Activated CD8-positive, alpha-beta T cell treated with anti-CD3 and anti-CD28 coated beads for 36 hours (primary cell): ENCODE measurements at regions of chr14 and their contacts with region 1.

Region 1: DNA sequence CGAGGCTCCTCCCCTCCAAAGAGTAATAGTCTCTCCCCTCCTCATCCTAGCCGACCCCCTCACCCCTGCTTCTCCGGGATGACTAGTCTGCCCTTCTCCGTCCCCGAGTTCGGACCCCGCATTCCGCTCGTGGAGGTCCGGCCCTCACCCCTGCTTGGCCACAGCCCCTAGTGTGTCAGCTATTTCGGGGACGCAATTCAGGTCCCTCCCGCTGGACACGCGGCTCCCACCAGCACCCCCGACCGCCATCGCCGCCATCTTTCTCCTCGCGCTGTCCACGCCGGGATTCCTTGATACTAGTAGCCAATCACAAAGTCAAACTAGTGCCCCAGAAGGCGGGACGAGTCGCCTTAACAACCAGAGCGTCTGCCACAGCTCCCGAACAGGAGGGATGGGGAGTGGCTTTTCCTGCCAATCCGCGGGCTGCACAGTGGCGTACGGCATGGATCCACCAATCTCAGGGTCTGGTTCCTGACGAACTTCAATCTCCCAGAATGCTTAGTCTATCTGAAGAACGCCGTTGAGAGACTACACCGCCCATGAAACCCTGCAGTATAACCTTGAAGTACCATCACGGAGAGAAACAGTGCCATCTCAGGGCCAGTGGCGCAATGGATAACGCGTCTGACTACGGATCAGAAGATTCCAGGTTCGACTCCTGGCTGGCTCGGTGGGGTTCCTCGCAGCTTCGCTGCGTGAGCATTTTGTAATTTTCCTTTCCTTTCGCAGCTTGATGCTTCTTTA is at the start of gene PRMT5:
- DNase-seq: peak; percentile 99
- ATAC-seq: peak; percentile 96
- H3K4me3 Mint-ChIP-seq: no peak within 1 kb of the TSS
- H3K27ac Mint-ChIP-seq: no peak within 1 kb of the TSS
- H3K4me1 Mint-ChIP-seq: peaks cover 31% of the 10 kb centered on the region
- H3K27me3 Mint-ChIP-seq: no peaks in the 10 kb centered on the region
- CTCF ChIP-seq: no peak
- total RNA-seq, gene PRMT5: 107 to 116 TPM

Region 2: GRCh38 chr14:22918804-22919600 is 10.3 kb before region 1 on chr14 and contains the start of gene RBM23:
- CTCF ChIA-PET with region 1: interaction called, 46 read pairs
- POLR2A ChIA-PET with region 1: interaction called, 50 read pairs
- intact Hi-C with region 1: no loop called
- DNase-seq: peak; percentile 100
- ATAC-seq: peak; percentile 95
- H3K4me3 Mint-ChIP-seq: peak within 1 kb of the TSS; percentile 89
- H3K27ac Mint-ChIP-seq: peak within 1 kb of the TSS; percentile 98
- H3K4me1 Mint-ChIP-seq: peaks cover 36% of the 10 kb centered on the region
- H3K27me3 Mint-ChIP-seq: no peaks in the 10 kb centered on the region
- CTCF ChIP-seq: no peak
- total RNA-seq, gene RBM23: 46.9 to 55.2 TPM

Region 3: GRCh38 chr14:22939684-22940083 is 10.4 kb after region 1 on chr14:
- CTCF ChIA-PET with region 1: interaction called, 30 read pairs
- POLR2A ChIA-PET with region 1: interaction called, 3 read pairs
- intact Hi-C with region 1: no loop called
- DNase-seq: no peak
- ATAC-seq: no peak
- H3K4me3 Mint-ChIP-seq: no peak overlapping the region
- H3K27ac Mint-ChIP-seq: no peak overlapping the region
- H3K4me1 Mint-ChIP-seq: no peaks in the 10 kb centered on the region
- H3K27me3 Mint-ChIP-seq: no peaks in the 10 kb centered on the region
- CTCF ChIP-seq: no peak

Region 4: DNA sequence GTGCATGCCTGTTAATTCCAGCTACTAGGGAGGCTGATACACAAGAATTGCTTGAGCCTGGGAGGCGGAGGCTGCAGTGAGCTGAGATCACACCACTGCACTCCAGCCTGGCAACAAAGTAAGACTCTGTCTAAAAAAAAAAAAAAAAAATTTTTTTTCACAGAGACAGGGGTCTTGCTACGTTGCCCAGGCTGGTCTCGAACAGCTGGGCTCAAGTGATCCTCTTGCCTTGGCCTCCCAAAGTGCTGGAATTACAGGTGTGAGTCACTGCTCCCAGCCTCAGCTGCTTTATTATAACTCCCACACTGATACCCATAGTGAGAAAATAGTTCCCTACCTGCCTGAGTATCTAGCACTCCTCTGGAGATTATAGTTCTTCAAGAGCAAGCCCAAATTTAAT is 16.4 kb after region 1 on chr14:
- CTCF ChIA-PET with region 1: interaction called, 86 read pairs
- POLR2A ChIA-PET with region 1: interaction called, 3 read pairs
- intact Hi-C with region 1: no loop called
- DNase-seq: no peak
- ATAC-seq: no peak
- H3K4me3 Mint-ChIP-seq: no peak overlapping the region
- H3K27ac Mint-ChIP-seq: no peak overlapping the region
- H3K4me1 Mint-ChIP-seq: no peaks in the 10 kb centered on the region
- H3K27me3 Mint-ChIP-seq: no peaks in the 10 kb centered on the region
- CTCF ChIP-seq: no peak

Region 5: DNA sequence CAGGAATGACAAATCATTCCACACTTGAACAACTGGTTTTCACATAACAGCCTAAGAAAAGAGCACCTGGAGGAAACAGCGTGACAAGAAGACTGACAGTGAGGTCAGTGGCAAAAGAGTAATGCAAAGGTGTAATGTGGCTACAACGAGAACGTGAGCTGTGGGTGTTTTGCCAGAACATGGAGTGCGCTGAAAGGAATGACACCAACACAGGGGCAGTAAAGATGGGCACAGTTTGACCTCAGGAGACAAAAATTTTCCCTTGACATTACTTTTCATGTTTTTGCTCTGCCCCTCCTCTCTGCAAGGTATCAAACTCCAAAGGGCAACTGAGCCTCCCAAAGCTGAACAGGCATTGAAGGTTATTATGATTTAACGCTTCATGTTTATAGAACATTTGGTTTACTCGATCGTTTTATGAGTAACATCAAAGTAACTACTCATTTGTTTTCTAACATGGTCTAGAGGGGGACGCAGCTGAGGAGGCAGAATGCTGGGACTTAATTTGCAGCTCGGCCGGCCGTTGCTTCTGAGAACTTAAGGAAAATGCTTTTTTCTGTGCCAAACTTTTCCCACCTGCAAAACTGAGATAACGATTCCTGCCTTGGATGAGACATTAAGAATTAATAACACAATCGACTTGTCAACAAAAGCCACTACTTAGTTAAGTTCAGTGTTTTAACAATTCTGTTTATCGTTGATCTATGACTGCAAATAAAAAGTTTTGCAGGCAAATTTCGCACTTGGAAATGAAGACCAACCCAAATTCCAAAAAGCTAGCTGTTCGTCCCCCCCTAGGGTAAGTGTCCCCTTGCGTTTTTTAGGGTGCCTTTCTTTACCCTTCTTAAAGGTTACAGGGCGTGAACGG is 26.7 kb after region 1 on chr14:
- CTCF ChIA-PET with region 1: interaction called, 86 read pairs
- POLR2A ChIA-PET with region 1: interaction called, 10 read pairs
- intact Hi-C with region 1: no loop called
- DNase-seq: no peak
- ATAC-seq: no peak
- H3K4me3 Mint-ChIP-seq: peak overlapping the region; percentile 93
- H3K27ac Mint-ChIP-seq: peak overlapping the region; percentile 93
- H3K4me1 Mint-ChIP-seq: peaks cover 25% of the 10 kb centered on the region
- H3K27me3 Mint-ChIP-seq: no peaks in the 10 kb centered on the region
- CTCF ChIP-seq: no peak

Region 6: GRCh38 chr14:22966783-22967269 is 37.5 kb after region 1 on chr14:
- CTCF ChIA-PET with region 1: interaction called, 29 read pairs
- POLR2A ChIA-PET with region 1: no interaction called
- intact Hi-C with region 1: no loop called
- DNase-seq: no peak
- ATAC-seq: no peak
- H3K4me3 Mint-ChIP-seq: no peak overlapping the region
- H3K27ac Mint-ChIP-seq: no peak overlapping the region
- H3K4me1 Mint-ChIP-seq: no peaks in the 10 kb centered on the region
- H3K27me3 Mint-ChIP-seq: no peaks in the 10 kb centered on the region
- CTCF ChIP-seq: no peak

Region 7: GRCh38 chr14:22973217-22974032 is 44.1 kb after region 1 on chr14:
- CTCF ChIA-PET with region 1: interaction called, 29 read pairs
- POLR2A ChIA-PET with region 1: interaction called, 3 read pairs
- intact Hi-C with region 1: no loop called
- DNase-seq: peak; percentile 56
- ATAC-seq: peak; percentile 69
- H3K4me3 Mint-ChIP-seq: no peak overlapping the region
- H3K27ac Mint-ChIP-seq: no peak overlapping the region
- H3K4me1 Mint-ChIP-seq: no peaks in the 10 kb centered on the region
- H3K27me3 Mint-ChIP-seq: no peaks in the 10 kb centered on the region
- CTCF ChIP-seq: peak; percentile 80